GM18951 (cell line): ENCODE measurements at regions of chr17 and their contacts with region 1.

Region 1: GRCh38 chr17:2244545-2245525 is 58.8 kb downstream of the SMG6 start:
- POLR2A ChIP-seq: no peak

Region 2: GRCh38 chr17:2064980-2065785 is 179.7 kb before region 1 on chr17:
- in situ Hi-C with region 1: loop called (anchors 10 kb)
- POLR2A ChIP-seq: no peak

Region 3: GRCh38 chr17:2484876-2485275 is 240.0 kb after region 1 on chr17:
- in situ Hi-C with region 1: no loop called
- POLR2A ChIP-seq: no peak

Region 4: DNA sequence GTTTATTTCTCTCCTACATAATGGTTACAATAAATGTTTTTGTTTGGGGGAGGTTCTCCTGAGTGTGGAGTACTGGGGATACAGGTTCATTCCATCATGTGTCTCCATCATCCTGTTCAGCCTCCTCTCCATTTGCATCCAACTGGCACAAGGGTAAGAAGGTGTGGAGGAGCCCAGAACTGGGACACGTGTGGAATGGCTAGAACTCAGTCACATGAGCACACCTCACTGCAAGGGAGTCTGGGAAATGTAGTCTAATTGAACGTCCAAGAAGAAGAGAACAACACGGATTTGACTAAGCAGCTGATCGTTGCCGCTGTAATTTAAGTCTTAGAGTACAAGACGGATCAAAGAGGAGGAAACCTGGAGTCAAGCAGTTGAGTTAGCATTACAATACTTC is 968.8 kb after region 1 on chr17:
- in situ Hi-C with region 1: no loop called
- POLR2A ChIP-seq: no peak